ENCODE measurements at regions of chr9 and their contacts with region 1.

Region 1: GRCh38 chr9:33778700-33779351 is 16.5 kb upstream of the PRSS3 start:
- DNase-seq: peak; percentile 56 to 73 (median 69)
- H3K4me3 ChIP-seq: no peak overlapping the region
- H3K27ac ChIP-seq: no peak overlapping the region
- H3K4me1 ChIP-seq: no peaks in the 10 kb centered on the region
- H3K27me3 ChIP-seq: no peaks in the 10 kb centered on the region

Region 2: DNA sequence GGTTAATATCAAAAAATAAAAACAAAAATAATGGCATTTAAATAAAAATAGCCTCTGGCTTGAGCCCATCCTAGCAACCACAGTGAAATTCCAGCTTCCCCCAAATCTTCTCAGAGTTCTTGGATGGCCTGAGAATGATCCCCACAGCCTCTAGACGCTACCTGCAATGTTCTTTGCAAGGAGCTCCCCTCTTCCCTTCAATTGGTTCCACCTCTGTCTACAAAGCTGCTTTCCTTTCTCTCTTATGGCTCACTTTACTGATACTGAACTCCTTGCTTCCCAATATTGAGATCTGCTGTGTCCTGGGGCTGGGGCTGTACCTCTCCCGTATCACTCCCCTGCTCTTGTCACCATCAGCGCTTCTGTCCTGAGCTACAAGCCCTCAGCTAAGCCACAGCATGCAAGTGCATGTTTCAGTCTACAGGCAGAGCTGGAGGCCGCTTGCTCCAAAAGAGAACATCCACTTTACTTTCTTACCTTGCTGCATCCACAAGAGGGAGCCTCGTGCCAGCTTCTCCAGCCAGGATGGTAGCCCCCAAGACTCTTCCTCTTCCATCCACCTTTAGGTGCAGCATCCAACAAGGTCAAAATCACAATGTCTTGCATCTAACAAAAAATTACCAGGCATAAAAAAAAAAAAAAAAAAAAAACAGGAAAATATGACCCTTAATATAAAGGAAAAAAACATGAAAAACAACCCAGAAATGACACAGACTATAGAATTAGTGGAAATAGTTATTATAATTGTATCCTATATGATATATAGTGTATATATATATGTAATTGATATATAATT is 40.8 kb before region 1 on chr9:
- CTCF ChIA-PET with region 1: interaction called, 14 read pairs
- POLR2A ChIA-PET with region 1: no interaction called
- DNase-seq: peak; percentile 55 to 77 (median 76)
- H3K4me3 ChIP-seq: no peak overlapping the region
- H3K27ac ChIP-seq: no peak overlapping the region
- H3K4me1 ChIP-seq: no peaks in the 10 kb centered on the region
- H3K27me3 ChIP-seq: no peaks in the 10 kb centered on the region

Region 3: DNA sequence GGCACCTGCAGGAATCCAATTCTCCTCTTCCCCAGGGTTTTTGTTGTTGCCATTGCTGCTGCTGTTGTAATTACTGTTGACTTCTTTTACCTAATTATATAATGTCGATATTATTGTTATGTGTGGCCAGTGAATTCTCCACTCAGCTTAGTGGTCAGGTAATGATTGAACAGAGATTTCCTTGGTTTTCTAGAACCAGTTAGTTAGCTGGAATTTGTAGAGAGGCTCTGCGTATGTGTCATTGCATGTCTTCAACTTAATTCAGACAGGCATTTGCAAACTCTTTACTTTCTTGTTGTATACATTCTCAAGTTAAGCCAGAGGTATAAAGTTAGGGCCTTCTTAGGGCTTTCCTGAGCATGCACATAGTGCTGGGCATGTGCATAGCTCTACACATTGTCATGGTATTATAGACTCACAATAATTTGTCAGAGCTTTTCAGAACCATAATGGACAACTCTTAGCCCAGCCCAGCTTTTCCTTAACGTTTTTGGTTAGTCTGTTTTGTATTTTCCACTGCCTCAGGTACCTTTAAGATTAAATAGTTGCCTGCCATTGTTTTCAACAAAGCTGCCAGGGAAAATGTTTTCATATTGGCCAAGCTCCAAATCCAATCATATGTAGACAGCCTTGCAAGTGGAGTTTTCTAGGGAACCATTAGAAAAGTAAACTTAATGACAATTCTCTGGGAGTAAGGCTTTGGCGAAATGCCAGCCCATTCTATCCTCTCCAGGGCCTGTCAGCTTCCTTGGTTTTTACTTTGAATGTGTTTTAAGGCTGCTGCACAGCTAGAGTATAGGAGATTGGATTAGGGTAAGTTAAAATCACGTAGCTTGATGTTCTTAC is 106.3 kb after region 1 on chr9:
- CTCF ChIA-PET with region 1: no interaction called
- POLR2A ChIA-PET with region 1: no interaction called
- DNase-seq: no peak
- H3K4me3 ChIP-seq: no peak overlapping the region
- H3K27ac ChIP-seq: no peak overlapping the region
- H3K4me1 ChIP-seq: no peaks in the 10 kb centered on the region
- H3K27me3 ChIP-seq: no peaks in the 10 kb centered on the region